ENCODE measurements at regions of chr12 and their contacts with region 1.

Region 1: GRCh38 chr12:13941258-13942249 is 39.8 kb downstream of the GRIN2B start:
- DNase-seq: peak; percentile 73
- H3K4me3 Mint-ChIP-seq: no peak overlapping the region
- H3K27ac Mint-ChIP-seq: peak overlapping the region; percentile 13
- H3K4me1 Mint-ChIP-seq: peaks cover 14% of the 10 kb centered on the region
- H3K27me3 Mint-ChIP-seq: no peaks in the 10 kb centered on the region
- CTCF ChIP-seq: peak; percentile 17

Region 2: GRCh38 chr12:13255792-13256691 is 685.5 kb before region 1 on chr12:
- CTCF ChIA-PET with region 1: interaction called, 13 read pairs
- intact Hi-C with region 1: loop called (anchors 10 kb)
- DNase-seq: peak; percentile 94
- H3K4me3 Mint-ChIP-seq: peak overlapping the region; percentile 53
- H3K27ac Mint-ChIP-seq: peak overlapping the region; percentile 16
- H3K4me1 Mint-ChIP-seq: peaks cover 11% of the 10 kb centered on the region
- H3K27me3 Mint-ChIP-seq: no peaks in the 10 kb centered on the region
- CTCF ChIP-seq: peak; percentile 86

Region 3: DNA sequence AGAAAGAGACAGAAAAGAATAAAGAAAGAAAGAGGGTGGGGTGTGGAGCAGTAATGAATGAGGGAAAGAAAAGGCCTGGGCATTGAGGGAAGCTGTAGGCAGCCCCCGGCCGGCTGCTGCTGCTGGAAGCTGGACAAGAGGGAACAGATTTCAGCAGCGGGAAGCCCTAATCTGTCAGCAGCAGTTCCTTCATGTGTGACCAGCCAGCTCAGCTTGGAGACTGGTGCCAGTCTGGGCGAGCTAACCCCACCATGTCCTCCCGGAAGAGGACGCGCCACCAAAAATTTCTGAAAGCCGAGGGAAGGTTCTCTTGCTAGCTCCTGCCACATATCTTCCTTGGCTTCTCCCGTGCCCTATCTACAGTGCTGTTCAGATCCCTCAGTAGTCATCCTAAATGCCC is 197.0 kb before region 1 on chr12:
- CTCF ChIA-PET with region 1: interaction called, 5 read pairs
- intact Hi-C with region 1: loop called (anchors 2 kb)
- DNase-seq: no peak
- H3K4me3 Mint-ChIP-seq: no peak overlapping the region
- H3K27ac Mint-ChIP-seq: no peak overlapping the region
- H3K4me1 Mint-ChIP-seq: no peaks in the 10 kb centered on the region
- H3K27me3 Mint-ChIP-seq: peaks cover 28% of the 10 kb centered on the region
- CTCF ChIP-seq: no peak

Region 4: GRCh38 chr12:13864081-13864673 is 77.4 kb before region 1 on chr12:
- CTCF ChIA-PET with region 1: interaction called, 16 read pairs
- intact Hi-C with region 1: loop called (anchors 1 kb)
- DNase-seq: peak; percentile 77
- H3K4me3 Mint-ChIP-seq: no peak overlapping the region
- H3K27ac Mint-ChIP-seq: no peak overlapping the region
- H3K4me1 Mint-ChIP-seq: no peaks in the 10 kb centered on the region
- H3K27me3 Mint-ChIP-seq: peaks cover 84% of the 10 kb centered on the region
- CTCF ChIP-seq: peak; percentile 81